ENCODE measurements at regions of chr5 and their contacts with region 1.

Region 1: GRCh38 chr5:146565764-146566367 is 49.9 kb upstream of the GPR151 start:
- DNase-seq: peak in 1 of 2 experiments; percentile 74
- H3K4me3 ChIP-seq: no peak overlapping the region
- H3K27ac ChIP-seq: no peak overlapping the region
- H3K4me1 ChIP-seq: peaks cover 0 to 7% (median 3%) of the 10 kb centered on the region in 4 experiments; a peak in 3 of 7 replicates
- H3K27me3 ChIP-seq: no peaks in the 10 kb centered on the region
- CTCF ChIP-seq: peak; percentile 47 to 86 (median 75)
- EP300 ChIP-seq: no peak
- POLR2A ChIP-seq: no peak
- RAD21 ChIP-seq: peak; percentile 80 to 89

Region 2: DNA sequence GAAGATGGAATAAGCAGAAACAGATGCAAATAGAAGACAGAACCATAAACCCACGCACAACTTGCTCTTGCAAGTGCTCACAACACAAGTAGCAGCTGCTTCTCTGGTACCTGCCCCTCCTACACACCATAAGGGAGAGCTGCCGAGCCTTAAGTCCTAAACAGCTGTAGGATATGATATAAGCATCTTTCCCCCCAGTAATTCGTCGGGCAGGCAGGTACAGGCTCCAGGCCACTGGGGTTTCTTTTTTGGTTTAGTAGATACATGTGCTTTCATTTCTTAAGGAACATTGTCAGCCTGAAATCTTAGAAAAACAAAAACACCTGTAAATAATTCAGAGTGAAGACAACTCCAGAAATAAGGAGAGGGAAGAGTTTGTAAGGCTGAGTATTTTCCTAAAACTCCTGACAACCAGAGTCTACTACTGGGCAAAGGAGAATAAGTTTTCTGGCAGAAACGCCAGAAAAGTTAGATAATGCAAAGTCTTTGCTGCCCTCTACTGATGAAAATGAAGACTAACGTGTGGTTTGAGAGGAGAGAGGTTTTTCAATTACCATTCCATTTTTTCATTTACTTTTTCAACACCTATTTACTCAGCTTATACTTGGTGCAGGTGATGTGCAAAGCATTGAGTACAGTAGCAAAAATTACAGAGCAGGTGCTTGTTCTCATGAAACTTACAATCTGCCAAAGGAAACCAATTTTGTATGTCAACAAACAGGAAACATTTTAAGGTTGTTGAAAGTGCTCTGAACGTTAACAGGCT is 138.8 kb before region 1 on chr5:
- CTCF ChIA-PET with region 1: no interaction called
- POLR2A ChIA-PET with region 1: no interaction called
- DNase-seq: no peak
- H3K4me3 ChIP-seq: no peak overlapping the region
- H3K27ac ChIP-seq: no peak overlapping the region
- H3K4me1 ChIP-seq: no peaks in the 10 kb centered on the region; a peak in 1 of 7 replicates
- H3K27me3 ChIP-seq: no peaks in the 10 kb centered on the region; a peak in 1 of 7 replicates
- CTCF ChIP-seq: peak in 2 of 3 experiments; percentile 59 to 68; a peak in 2 of 4 replicates
- EP300 ChIP-seq: no peak
- POLR2A ChIP-seq: no peak
- RAD21 ChIP-seq: peak; percentile 89

Region 3: DNA sequence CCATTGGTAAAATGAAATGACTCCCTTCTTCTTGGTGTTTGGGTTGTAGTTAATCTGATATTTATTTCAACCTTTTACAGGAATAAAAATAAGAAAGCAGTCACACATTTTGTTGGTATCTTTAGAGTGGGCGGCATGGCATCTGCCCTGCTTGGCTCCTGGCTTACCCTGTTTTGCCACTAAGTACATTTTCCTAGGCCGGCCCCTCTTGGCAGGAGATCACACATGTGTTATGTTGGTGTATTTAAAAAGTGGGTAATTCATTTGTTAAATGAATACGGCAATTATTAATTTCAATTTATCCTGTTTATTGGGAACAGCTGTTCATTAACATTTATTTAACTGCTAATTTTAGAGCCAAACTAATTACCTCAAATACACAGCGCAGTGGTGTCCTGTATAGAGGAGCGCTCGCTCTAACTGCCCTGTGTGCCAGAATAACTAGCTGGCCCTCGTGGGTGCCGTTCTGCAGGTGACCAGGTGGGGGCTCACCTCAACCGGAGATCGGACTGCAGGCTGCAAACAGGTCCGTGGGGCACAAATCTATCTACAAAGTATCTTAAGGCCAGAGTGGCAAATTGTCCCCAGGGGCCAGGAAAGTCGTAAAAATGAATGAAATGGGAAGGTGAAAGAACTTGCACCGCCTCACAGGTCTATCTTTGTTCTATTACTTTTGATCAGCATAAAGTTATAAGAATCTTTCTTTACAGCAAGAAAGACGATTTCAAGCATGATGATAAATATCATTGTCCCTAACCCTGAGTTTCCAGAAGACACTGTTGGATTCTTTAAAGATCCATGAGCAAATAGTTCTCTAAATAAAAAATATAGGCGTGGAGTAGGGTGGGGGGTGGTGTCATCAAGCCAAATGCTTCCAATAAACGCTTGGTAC is 23.7 kb before region 1 on chr5:
- CTCF ChIA-PET with region 1: interaction called, 19 read pairs
- POLR2A ChIA-PET with region 1: no interaction called
- DNase-seq: peak; percentile 61 to 93
- H3K4me3 ChIP-seq: no peak overlapping the region
- H3K27ac ChIP-seq: no peak overlapping the region
- H3K4me1 ChIP-seq: peaks cover 0 to 3% (median 0%) of the 10 kb centered on the region in 4 experiments; a peak in 1 of 7 replicates
- H3K27me3 ChIP-seq: no peaks in the 10 kb centered on the region
- CTCF ChIP-seq: peak; percentile 89 to 100 (median 94)
- EP300 ChIP-seq: no peak
- POLR2A ChIP-seq: no peak
- RAD21 ChIP-seq: peak; percentile 99

Region 4: DNA sequence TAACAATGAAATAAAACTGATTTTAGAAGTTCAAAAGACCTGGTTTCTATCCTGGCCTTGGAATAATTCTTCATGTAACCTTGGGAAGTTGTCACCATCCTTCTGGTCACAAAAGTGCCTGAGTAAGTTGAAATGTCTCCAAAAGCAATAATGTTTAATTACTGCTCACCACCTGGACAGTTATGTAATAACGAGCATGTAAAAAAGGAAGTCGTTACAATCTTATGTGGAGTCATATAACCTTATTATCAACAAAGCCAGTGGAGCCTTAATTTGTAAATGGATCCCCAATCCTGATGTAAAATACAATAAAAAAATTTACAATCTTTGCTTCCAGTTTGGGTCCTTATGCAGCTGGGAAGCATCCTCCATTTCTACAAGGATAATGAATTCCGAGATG is 14.4 kb after region 1 on chr5:
- CTCF ChIA-PET with region 1: interaction called, 15 read pairs
- POLR2A ChIA-PET with region 1: no interaction called
- DNase-seq: no peak
- H3K4me3 ChIP-seq: no peak overlapping the region
- H3K27ac ChIP-seq: no peak overlapping the region
- H3K4me1 ChIP-seq: no peaks in the 10 kb centered on the region
- H3K27me3 ChIP-seq: no peaks in the 10 kb centered on the region; a peak in 1 of 7 replicates
- CTCF ChIP-seq: no peak
- EP300 ChIP-seq: no peak
- POLR2A ChIP-seq: no peak
- RAD21 ChIP-seq: no peak

Measured in H1 (cell line).